ENCODE measurements at regions of chr11 and their contacts with region 1.

Region 1: DNA sequence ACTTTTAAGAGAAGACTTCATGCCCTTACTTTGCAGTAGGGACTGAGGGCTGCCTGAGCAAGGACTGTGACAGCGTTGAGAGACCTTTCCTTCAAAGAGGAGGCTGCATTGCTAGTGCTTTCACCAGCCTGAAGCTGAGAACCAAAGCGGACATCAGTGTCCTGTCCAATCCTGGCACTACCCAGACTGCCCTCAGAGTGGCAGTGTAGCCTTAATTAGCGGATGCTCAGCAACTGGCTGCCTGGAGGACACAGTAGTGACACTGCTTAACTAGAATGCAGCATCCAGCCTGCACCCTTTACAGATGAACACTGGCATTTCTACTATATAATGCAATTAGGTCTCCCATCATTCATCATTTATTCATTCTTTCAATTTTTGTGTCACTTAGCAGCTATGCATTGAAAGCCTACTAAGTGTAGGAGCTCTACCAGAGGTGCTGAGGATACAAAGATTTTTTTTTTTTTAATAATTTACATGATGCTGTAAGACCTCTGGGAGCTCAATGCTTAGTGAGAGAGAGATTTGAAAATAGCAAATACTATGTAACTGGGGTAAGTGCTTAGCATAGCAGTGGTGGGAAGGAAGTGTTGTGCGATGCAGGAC is 36.9 kb upstream of the SLC36A4 start:
- DNase-seq: peak; percentile 90
- H3K4me3 ChIP-seq: no peak overlapping the region
- H3K27ac ChIP-seq: no peak overlapping the region
- H3K4me1 ChIP-seq: peaks cover 9% of the 10 kb centered on the region
- H3K27me3 ChIP-seq: no peaks in the 10 kb centered on the region
- CTCF ChIP-seq: peak; percentile 71 to 83 (median 80)
- POLR2A ChIP-seq: no peak

Region 2: DNA sequence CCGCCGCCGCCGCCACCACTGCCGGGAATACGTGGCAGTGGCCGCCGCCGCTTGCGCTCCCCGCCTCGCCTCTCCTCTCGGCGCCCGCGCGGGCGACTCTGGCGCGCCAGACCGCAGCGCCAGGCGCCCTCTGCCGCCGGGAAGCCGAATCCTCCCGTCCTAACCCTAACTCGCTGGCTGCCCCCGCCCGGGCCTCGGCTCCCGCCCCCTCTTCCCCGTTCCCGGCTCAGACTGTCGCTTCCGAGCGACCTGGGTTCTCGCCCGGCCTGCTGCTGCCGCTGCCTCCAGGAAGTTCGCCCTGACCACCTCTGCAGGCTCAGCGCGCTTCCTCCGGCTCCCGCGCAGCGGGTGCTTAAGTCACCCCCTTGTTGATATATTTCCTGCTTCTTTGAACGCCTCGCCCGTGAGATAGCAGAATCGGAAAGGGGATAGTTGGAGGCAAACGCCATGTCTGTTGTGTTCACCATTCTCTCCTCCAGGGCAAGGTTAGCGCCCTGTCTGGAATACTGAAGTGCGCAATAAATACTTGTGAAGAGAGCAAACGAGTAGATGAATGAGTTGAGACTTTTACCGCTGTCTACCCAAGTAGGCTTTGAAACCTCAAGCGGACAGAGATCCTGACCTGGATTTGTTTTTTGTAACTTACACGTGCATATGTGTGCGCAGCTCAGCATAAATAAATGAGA is 308.7 kb after region 1 on chr11 and contains the start of gene SMCO4:
- intact Hi-C with region 1: loop called (anchors 5 kb)
- DNase-seq: peak; percentile 86
- H3K4me3 ChIP-seq: peak within 1 kb of the TSS; percentile 84 to 86
- H3K27ac ChIP-seq: peak within 1 kb of the TSS; percentile 85 to 94
- H3K4me1 ChIP-seq: peaks cover 17% of the 10 kb centered on the region
- H3K27me3 ChIP-seq: no peaks in the 10 kb centered on the region
- CTCF ChIP-seq: peak; percentile 48 to 73 (median 59)
- POLR2A ChIP-seq: no peak
- total RNA-seq, gene SMCO4: 33.6 to 34.2 TPM

Region 3: GRCh38 chr11:93648167-93648566 is 413.5 kb after region 1 on chr11:
- intact Hi-C with region 1: loop called (anchors 10 kb)
- DNase-seq: no peak
- H3K4me3 ChIP-seq: no peak overlapping the region
- H3K27ac ChIP-seq: no peak overlapping the region
- H3K4me1 ChIP-seq: no peaks in the 10 kb centered on the region
- H3K27me3 ChIP-seq: no peaks in the 10 kb centered on the region
- CTCF ChIP-seq: no peak
- POLR2A ChIP-seq: no peak